HepG2 (cell line): ENCODE measurements at regions of chr9 and their contacts with region 1.

Region 1: DNA sequence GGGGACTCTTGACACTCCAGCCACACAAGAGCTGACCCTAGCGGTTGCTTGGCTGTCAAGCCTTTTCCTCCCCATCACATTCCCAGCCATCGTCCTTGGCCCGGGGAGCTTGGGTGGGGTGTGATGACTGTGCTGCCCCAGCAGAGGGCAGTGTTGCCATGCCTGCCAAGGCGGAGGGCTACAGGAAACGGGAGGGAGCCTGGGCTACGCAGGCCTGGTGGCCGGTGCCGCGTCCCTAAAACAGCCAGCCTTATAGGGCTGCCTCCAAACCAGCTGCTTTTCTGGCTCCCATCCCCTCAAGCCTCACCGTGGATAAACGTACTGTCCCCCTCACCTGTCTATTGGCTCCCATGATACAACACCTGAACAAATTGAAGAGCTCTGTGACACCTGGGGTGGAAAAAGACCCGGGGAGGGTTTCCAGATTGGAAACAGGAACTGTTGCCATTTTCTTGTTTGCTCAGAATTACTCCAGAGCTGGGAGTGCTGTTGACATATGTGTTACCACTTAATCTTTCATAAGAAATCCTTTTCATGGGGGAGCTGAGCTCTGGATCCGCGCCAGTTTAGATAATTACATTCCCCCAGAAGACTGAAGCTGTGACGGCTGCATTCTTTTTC is 72.8 kb upstream of the ASTN2 start:
- DNase-seq: peak; percentile 72
- ATAC-seq: peak; percentile 93
- H3K4me3 ChIP-seq: peak overlapping the region; percentile 43 to 62 (median 46)
- H3K27ac ChIP-seq: peak overlapping the region; percentile 74
- H3K4me1 ChIP-seq: peaks cover 58% of the 10 kb centered on the region
- H3K27me3 ChIP-seq: no peaks in the 10 kb centered on the region
- CTCF ChIP-seq: peak; percentile 100
- EP300 ChIP-seq: peak in 1 of 2 experiments; percentile 76; a peak in 1 of 4 replicates
- POLR2A ChIP-seq: no peak
- RAD21 ChIP-seq: peak; percentile 98

Region 2: DNA sequence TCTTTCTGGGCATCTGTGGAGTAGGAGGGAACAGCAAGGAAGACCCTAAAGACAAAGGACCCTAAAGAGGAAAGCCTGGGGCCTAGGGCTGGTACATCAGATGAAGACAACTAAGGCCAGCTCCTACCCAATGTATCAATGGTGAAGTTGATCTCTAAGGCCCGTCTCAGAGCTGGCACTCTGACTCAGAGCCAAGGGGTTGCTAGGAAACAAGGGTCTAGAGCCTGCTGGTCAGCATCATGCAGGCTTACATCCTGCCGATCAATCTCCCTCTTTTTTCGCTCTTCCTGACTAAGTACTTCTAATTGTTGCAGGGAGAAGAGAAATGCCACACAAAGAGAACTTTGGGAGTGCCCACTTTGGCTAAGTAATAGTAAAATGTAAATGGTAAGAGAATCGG is 774.4 kb before region 1 on chr9:
- CTCF ChIA-PET with region 1: no interaction called
- POLR2A ChIA-PET with region 1: no interaction called
- in situ Hi-C with region 1: no loop called
- intact Hi-C with region 1: no loop called
- DNase-seq: no peak
- ATAC-seq: no peak
- H3K4me3 ChIP-seq: no peak overlapping the region
- H3K27ac ChIP-seq: no peak overlapping the region
- H3K4me1 ChIP-seq: no peaks in the 10 kb centered on the region
- H3K27me3 ChIP-seq: no peaks in the 10 kb centered on the region
- CTCF ChIP-seq: no peak
- EP300 ChIP-seq: no peak
- POLR2A ChIP-seq: no peak
- RAD21 ChIP-seq: no peak

Region 3: DNA sequence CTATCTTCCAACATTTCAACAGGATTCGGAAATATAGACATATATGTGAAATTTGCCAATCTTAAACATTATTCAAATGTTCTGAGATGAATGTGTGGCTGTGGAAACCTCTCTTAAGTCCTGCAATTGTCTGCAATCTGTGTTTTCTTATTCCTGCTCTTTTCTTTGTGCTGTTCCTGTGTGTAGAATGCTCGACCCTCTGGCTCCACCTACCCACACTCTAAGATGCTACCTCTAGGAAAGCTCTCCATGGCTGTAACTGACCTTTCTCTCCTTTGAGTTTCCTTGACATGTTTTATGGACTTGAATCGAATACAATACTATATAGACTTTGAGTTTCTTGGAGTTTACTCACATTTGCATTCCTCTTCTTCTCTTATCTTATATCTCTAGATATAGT is 47.8 kb after region 1 on chr9:
- CTCF ChIA-PET with region 1: no interaction called
- POLR2A ChIA-PET with region 1: no interaction called
- in situ Hi-C with region 1: no loop called
- intact Hi-C with region 1: loop called (anchors 5 kb)
- DNase-seq: no peak
- ATAC-seq: no peak
- H3K4me3 ChIP-seq: no peak overlapping the region
- H3K27ac ChIP-seq: no peak overlapping the region
- H3K4me1 ChIP-seq: no peaks in the 10 kb centered on the region
- H3K27me3 ChIP-seq: no peaks in the 10 kb centered on the region
- CTCF ChIP-seq: no peak; the same call in 1 of the 2 replicates
- EP300 ChIP-seq: no peak
- POLR2A ChIP-seq: no peak
- RAD21 ChIP-seq: no peak

Region 4: GRCh38 chr9:117555964-117556629 is 68.4 kb after region 1 on chr9:
- CTCF ChIA-PET with region 1: interaction called, 41 read pairs
- POLR2A ChIA-PET with region 1: no interaction called
- in situ Hi-C with region 1: loop called (anchors 5 kb)
- intact Hi-C with region 1: loop called (anchors 1 kb)
- DNase-seq: peak; percentile 60
- ATAC-seq: peak; percentile 96
- H3K4me3 ChIP-seq: no peak overlapping the region
- H3K27ac ChIP-seq: no peak overlapping the region
- H3K4me1 ChIP-seq: peaks cover 7% of the 10 kb centered on the region; the same call in 1 of the 2 replicates
- H3K27me3 ChIP-seq: no peaks in the 10 kb centered on the region
- CTCF ChIP-seq: peak; percentile 76
- EP300 ChIP-seq: no peak
- POLR2A ChIP-seq: no peak
- RAD21 ChIP-seq: peak; percentile 41; the same call in 1 of the 2 replicates